ENCODE measurements at regions of chr10 and their contacts with region 1.

Region 1: GRCh38 chr10:104209575-104210198 is 22.5 kb downstream of the CFAP43 start:
- DNase-seq: peak in 2 of 6 donors; percentile 33 to 40
- ATAC-seq: peak in 3 of 4 donors; percentile 71 to 79 (median 78)
- H3K4me3 ChIP-seq: no peak overlapping the region
- H3K27ac ChIP-seq: no peak overlapping the region
- H3K4me1 ChIP-seq: no peaks in the 10 kb centered on the region
- H3K27me3 ChIP-seq: no peaks in the 10 kb centered on the region
- CTCF ChIP-seq: peak in 3 of 4 donors; percentile 17 to 34 (median 20)

Region 2: DNA sequence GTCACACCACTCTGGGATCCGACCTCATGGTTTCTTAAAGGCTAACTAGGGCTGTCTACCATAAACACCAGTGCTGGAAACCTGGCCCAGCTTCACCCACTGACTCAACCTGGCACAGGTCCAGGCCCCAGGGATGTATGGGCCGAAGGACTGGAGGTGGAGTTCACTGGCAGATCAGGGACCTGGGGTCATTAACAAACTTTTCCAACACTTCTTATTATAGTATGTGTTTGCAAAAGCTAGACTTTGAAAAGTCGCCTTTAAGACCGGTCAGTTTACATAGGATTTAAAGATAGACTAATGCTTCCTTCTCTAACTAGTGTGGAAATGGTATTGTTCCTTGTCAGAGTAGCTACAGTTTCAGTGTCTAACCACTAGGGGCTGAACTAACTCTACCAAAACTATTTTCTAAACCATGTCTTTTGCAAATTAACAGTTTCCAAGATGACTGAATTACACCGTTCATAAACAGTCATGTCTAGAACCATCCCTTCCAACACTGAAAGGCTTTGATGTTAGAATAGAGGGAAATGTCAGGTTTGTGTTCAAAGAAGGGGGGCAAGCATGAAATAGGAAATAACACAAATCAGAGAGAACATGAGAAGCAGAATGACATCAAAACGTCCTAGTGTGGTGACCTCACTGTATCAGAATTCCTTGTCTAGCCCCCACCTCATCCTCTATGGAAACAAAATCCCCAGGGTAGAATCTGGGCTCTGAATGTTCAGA is 321.4 kb before region 1 on chr10:
- intact Hi-C with region 1: loop called in 1 of 3 experiments (anchors 10 kb)
- DNase-seq: peak; percentile 84 to 96 (median 92)
- ATAC-seq: peak; percentile 75 to 79 (median 76)
- H3K4me3 ChIP-seq: no peak overlapping the region
- H3K27ac ChIP-seq: peak overlapping the region; percentile 42 to 83 (median 70)
- H3K4me1 ChIP-seq: peaks cover 24 to 39% (median 38%) of the 10 kb centered on the region in 3 donors
- H3K27me3 ChIP-seq: no peaks in the 10 kb centered on the region
- CTCF ChIP-seq: peak; percentile 60 to 82 (median 67)

Region 3: DNA sequence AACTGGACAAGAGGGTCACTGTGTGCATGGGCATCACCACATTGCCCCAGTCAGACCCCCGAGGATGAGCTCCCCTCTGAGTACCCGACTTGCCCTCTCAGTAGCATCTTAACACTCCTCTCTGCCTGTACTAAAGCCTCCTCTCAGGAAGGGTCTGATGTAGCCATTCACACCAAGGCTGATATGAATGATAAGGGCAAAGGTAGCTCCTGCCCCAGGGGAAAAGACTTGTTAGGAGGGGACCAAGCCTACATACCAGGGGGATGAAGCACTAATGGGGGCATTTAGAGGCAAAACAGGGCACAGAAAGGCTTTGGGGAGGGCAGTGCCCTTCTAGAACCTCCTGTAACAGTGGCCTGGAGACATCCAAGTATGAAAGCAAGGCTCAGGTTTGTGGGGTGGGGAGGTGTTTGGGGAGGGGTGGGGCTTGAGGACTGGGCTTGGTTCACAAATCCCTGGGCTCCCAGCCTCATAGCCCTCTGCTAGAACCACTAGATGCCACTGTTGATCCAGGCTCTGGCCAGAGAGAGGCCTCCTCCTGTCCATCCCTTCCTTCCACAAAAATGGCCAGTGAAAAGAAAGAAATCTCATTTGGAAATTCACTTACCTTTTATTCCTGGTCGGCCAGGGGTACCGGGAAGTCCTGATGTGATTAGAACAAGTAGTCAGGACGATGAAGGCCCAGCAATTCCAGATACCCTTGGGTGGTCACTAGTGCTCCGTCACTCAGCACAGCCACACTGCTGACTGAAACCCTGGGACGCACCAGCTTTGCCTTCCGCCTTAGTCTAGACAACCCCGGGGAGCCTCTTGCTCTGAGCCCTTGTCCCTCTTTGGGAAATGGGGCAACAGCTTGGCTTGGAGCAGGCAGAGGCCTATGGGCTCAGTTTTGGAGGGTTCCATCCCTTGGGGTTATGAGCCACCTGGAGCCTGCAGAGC is 164.3 kb before region 1 on chr10:
- intact Hi-C with region 1: loop called in 1 of 3 experiments (anchors 10 kb)
- DNase-seq: peak in 1 of 6 donors; percentile 35
- ATAC-seq: peak; percentile 60 to 92 (median 84)
- H3K4me3 ChIP-seq: no peak overlapping the region
- H3K27ac ChIP-seq: no peak overlapping the region
- H3K4me1 ChIP-seq: no peaks in the 10 kb centered on the region
- H3K27me3 ChIP-seq: no peaks in the 10 kb centered on the region
- CTCF ChIP-seq: peak in 3 of 4 donors; percentile 15 to 29 (median 22)

Region 4: GRCh38 chr10:104291439-104291951 is 81.8 kb after region 1 on chr10:
- intact Hi-C with region 1: no loop called
- DNase-seq: peak; percentile 77 to 94 (median 86)
- ATAC-seq: peak; percentile 96 to 100 (median 99)
- H3K4me3 ChIP-seq: no peak overlapping the region
- H3K27ac ChIP-seq: no peak overlapping the region
- H3K4me1 ChIP-seq: no peaks in the 10 kb centered on the region
- H3K27me3 ChIP-seq: no peaks in the 10 kb centered on the region
- CTCF ChIP-seq: peak; percentile 100